Heart right ventricle (tissue), 16 donors: ENCODE measurements at regions of chr12 and their contacts with region 1.

Region 1: GRCh38 chr12:14257734-14258574 is 107.5 kb upstream of the ATF7IP start:
- DNase-seq: peak in 1 of 2 donors; percentile 98
- ATAC-seq: peak in 7 of 8 donors; percentile 83 to 92 (median 89)
- H3K4me3 ChIP-seq: peak overlapping the region in 7 of 10 donors; percentile 6 to 30 (median 22)
- H3K27ac ChIP-seq: peak overlapping the region; percentile 83 to 96 (median 92)
- H3K4me1 ChIP-seq: peaks cover 13 to 76% (median 52%) of the 10 kb centered on the region in 9 donors
- H3K27me3 ChIP-seq: no peaks in the 10 kb centered on the region
- CTCF ChIP-seq: no peak

Region 2: DNA sequence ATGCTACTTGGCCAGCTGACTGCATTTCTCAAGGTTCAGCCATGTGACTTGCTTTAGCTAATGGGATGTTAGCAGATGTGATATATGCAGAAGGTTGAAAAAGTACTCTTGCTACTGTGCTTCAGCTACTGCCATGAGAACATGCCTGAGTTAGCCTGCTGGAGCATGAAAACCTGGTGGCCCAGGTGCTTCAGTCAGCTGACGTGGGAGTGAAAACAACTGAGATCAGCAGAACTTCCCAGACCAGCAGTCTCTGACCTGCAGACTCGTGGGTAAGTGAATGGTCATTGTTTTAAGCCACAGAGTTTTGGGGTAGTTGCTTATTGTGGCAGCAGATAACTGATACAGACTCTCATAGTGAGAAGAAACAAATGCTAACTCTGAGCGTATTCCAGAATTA is 158.0 kb before region 1 on chr12:
- intact Hi-C with region 1: no loop called
- DNase-seq: no peak
- ATAC-seq: no peak
- H3K4me3 ChIP-seq: no peak overlapping the region
- H3K27ac ChIP-seq: no peak overlapping the region
- H3K4me1 ChIP-seq: no peaks in the 10 kb centered on the region
- H3K27me3 ChIP-seq: no peaks in the 10 kb centered on the region
- CTCF ChIP-seq: no peak

Region 3: GRCh38 chr12:14327711-14328381 is 69.9 kb after region 1 on chr12:
- intact Hi-C with region 1: no loop called
- DNase-seq: no peak
- ATAC-seq: no peak
- H3K4me3 ChIP-seq: no peak overlapping the region
- H3K27ac ChIP-seq: peak overlapping the region in 1 of 10 donors; percentile 15
- H3K4me1 ChIP-seq: peaks cover 0 to 5% (median 0%) of the 10 kb centered on the region in 9 donors
- H3K27me3 ChIP-seq: no peaks in the 10 kb centered on the region
- CTCF ChIP-seq: no peak

Region 4: DNA sequence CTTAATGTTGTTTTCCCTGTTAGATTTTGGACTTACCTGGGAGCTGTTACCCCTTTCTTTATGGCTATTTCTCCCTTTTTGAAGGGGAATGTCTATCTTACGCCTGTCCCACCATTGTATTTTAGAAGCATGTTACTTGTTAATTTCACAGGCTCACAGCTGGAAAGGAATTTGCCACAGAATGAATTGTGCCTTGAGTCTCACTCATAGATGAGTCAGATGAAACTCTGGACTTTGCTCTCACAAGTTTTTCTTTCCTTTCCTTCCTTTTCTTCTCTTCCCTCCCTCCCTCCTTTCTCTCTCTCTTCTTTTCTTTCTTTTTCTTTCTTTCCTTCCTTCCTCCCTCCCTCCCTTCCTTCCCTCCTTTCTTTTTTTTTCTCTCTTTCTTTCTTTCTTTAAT is 98.2 kb after region 1 on chr12:
- intact Hi-C with region 1: loop called in 2 of 10 experiments (anchors 5 to 10 kb)
- DNase-seq: no peak
- ATAC-seq: no peak
- H3K4me3 ChIP-seq: no peak overlapping the region
- H3K27ac ChIP-seq: no peak overlapping the region
- H3K4me1 ChIP-seq: no peaks in the 10 kb centered on the region
- H3K27me3 ChIP-seq: no peaks in the 10 kb centered on the region
- CTCF ChIP-seq: no peak

Region 5: DNA sequence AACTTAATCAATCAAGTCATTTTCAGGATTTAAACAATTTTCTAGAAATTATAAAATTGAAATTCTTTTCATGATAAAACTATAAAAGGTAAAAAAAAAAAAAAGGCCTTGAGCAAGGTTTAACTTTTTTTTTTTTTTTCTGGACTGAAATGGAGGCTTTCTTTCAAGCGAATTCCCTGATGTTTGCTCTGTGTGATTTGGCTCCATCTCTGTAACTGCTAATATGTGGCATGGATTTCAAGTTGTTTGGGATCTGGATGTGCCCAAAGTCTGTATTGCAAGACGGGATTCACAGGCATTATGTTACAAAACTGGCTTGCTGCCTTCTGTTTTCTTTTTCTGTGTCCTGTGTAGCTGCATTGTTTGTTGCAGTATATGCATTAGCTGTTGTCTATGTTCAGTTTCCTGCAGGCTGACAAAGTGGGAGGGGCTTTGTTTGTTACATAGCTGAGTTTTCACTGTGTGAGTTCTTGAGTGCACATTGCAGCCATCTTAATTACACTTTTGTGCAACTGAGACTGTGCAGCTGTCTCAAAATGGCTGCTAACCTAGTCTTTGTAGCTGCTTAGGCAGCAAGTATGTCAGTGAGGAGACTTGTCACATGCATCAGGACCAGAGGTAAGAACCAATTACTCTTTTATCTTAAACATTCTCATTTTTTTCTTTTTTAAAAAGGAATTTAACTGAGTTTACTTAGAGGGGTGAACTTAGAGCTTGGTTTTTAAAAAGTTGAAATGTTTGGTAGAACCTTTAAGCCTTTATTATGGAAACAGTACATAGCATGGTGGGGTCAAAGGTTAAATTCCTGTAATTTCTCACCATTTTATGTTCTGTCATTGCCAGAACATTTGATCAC is 127.1 kb after region 1 on chr12:
- intact Hi-C with region 1: loop called in 3 of 10 experiments (anchors 1 to 5 kb)
- DNase-seq: peak in 1 of 2 donors; percentile 79
- ATAC-seq: peak; percentile 91 to 97 (median 96)
- H3K4me3 ChIP-seq: peak overlapping the region; percentile 22 to 47 (median 40)
- H3K27ac ChIP-seq: peak overlapping the region; percentile 21 to 87 (median 78)
- H3K4me1 ChIP-seq: peaks cover 0 to 63% (median 35%) of the 10 kb centered on the region in 9 donors
- H3K27me3 ChIP-seq: no peaks in the 10 kb centered on the region
- CTCF ChIP-seq: no peak

Region 6: DNA sequence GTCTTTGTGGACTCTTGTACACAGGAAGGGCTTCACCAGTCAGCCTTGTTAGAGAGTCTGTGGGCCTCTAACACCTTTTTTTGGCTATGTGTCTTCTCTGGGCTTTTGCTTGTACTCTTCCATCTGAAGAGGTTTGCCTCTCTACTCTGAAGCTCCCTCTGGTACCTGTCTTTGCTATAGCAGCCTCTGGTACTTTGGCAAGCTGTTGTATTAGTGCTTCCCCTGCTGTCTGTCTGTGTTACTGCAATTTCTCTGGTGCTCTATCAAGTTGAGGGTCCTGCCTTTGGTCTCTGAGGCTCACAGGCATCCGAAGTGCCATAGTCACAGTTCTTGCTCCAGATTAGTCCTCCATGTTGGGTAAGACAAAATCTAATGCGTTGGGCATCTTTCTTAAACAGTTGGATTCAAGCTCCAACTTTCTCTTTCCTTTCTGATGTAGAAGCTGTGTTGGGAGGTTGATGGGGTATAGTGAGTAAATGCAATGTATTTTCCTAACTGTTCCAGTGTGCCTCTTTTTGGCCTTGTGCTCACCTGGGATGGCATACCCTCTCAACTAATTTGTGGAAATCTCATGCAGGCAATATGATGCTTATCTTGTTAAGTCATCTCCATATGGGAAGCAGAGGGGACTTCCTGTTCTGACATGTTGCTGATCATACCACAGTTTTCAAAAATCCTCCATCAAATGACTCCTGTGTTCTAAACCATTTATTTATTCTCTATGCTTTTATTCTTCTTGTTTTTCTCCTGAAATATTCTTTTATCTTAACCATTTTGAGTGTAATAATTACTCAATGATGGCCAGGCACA is 196.3 kb after region 1 on chr12:
- intact Hi-C with region 1: loop called in 1 of 10 experiments (anchors 5 kb)
- DNase-seq: no peak
- ATAC-seq: peak in 3 of 8 donors; percentile 38 to 46 (median 45)
- H3K4me3 ChIP-seq: no peak overlapping the region
- H3K27ac ChIP-seq: no peak overlapping the region
- H3K4me1 ChIP-seq: peaks cover 0 to 27% (median 0%) of the 10 kb centered on the region in 9 donors
- H3K27me3 ChIP-seq: no peaks in the 10 kb centered on the region
- CTCF ChIP-seq: peak; percentile 6 to 59 (median 43)

Region 7: GRCh38 chr12:14995583-14996425 is 737.9 kb after region 1 on chr12:
- intact Hi-C with region 1: loop called in 1 of 10 experiments (anchors 10 kb)
- DNase-seq: no peak
- ATAC-seq: peak in 5 of 8 donors; percentile 16 to 67 (median 60)
- H3K4me3 ChIP-seq: no peak overlapping the region
- H3K27ac ChIP-seq: peak overlapping the region in 1 of 10 donors; percentile 23
- H3K4me1 ChIP-seq: peaks cover 0 to 25% (median 4%) of the 10 kb centered on the region in 9 donors
- H3K27me3 ChIP-seq: no peaks in the 10 kb centered on the region
- CTCF ChIP-seq: peak; percentile 64 to 85 (median 74)